ENCODE measurements at regions of chr11 and their contacts with region 1.

Region 1: GRCh38 chr11:46389450-46390253 is 1.9 kb downstream of the CHRM4 start:
- DNase-seq: peak; percentile 75
- ATAC-seq: peak; percentile 61 to 65

Region 2: DNA sequence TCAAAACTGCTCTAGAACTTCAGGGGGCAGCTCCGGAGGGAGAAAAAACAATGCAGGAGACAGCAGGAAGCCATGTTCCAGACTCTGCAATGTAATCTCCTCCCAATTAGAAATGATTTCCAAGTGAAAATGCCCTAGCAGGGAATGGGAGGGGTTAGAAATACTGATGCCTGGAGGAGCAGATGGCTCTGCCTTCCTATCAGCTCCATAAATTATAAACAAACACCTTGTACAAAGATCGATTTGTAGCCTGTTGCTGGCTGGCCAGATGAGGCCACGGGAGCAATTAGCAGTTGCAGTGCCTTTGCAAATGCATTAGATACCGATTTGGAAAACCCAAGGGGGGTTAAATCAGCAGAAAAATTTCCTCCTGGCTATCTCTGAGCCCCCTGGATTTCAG is 48.6 kb after region 1 on chr11:
- intact Hi-C with region 1: no loop called
- DNase-seq: no peak
- ATAC-seq: no peak

Region 3: DNA sequence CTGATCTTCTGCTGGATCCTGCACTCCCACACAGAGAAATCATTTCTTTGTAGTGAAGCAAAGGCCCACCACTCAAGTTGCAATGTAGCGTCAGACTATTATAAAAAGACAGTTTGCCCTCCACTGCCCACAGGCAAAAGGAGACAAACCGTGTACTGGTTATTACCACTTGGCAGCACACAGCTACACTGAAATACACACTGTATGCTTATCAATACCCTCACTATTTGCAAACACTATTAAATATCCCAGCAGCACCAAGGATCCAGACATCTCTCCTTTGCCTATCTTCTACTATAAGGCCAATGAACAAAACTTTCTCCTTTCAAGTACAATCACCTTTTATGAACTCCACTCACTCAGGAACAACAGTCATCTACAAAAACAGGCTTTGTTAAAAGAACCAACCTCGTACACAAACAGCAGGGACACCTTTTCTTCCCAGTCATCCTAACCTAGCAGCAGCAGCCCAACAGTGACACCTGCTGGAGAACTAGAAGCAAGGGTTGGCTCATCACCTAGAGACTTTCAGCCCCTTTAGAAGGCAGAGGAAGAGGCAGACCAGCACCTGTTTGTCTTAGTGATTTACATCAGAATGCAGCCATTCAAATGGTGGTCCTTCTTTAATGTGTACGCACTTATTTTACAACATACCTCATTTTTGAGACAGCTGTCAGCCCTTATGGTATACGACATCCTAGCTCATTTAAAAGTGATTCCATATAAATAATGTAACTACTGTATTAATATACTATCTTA is 148.1 kb after region 1 on chr11:
- intact Hi-C with region 1: loop called (anchors 2 to 5 kb)
- DNase-seq: peak; percentile 58
- ATAC-seq: peak; percentile 69 to 78

Region 4: DNA sequence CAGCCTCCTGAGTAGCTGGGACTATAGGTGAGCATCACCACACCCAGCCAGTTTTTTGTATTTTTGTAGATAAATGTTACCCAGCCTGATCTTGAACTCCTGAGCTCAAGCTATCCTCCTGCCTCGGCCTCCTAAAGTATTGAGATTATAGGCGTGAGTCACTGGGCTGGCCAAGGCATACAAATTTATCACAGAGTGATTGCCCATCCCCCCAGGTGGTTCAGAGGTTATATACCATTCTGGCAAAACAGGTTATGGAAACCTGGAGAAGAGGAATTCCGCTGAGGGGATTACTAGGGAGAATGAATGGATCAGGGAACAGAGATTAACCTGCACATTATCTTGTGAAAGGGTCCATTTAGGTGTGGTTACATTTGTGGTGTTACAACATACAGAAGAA is 235.7 kb after region 1 on chr11:
- intact Hi-C with region 1: loop called in 1 of 2 experiments (anchors 10 kb)
- DNase-seq: no peak
- ATAC-seq: no peak